ENCODE measurements at regions of chr11 and their contacts with region 1.

Region 1: GRCh38 chr11:74929431-74930363 is 19.2 kb downstream of the XRRA1 start:
- DNase-seq: peak; percentile 80
- ATAC-seq: peak; percentile 66
- H3K4me3 Mint-ChIP-seq: no peak overlapping the region
- H3K27ac Mint-ChIP-seq: no peak overlapping the region
- H3K4me1 Mint-ChIP-seq: peaks cover 54% of the 10 kb centered on the region
- H3K27me3 Mint-ChIP-seq: no peaks in the 10 kb centered on the region

Region 2: DNA sequence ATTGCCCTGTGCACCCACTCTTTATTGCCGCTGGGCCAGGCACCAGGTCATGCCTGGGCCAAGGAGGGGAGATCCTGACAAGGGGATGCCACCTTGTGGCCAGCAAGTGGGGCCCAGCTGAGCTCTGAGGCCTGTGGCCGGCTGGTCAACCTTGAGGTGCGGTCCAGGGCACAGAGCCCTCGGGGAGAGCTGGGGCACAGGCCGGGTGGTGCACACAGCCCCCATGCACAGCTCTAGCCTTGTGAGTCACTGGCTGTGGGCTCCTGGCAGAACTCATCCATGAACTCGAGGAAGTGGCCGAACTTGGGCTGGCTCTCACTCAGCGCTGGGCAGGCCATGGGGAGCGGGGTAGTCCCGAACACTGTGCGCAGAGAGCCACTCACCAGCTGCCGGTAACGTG is 86.7 kb before region 1 on chr11:
- CTCF ChIA-PET with region 1: no interaction called
- DNase-seq: no peak
- ATAC-seq: no peak
- H3K4me3 Mint-ChIP-seq: no peak overlapping the region
- H3K27ac Mint-ChIP-seq: no peak overlapping the region
- H3K4me1 Mint-ChIP-seq: peaks cover 10% of the 10 kb centered on the region
- H3K27me3 Mint-ChIP-seq: no peaks in the 10 kb centered on the region

Region 3: GRCh38 chr11:74988541-74989260 is 59.0 kb after region 1 on chr11 and contains the start of gene NEU3:
- CTCF ChIA-PET with region 1: interaction called, 15 read pairs
- DNase-seq: peak; percentile 92
- ATAC-seq: peak; percentile 97
- H3K4me3 Mint-ChIP-seq: peak within 1 kb of the TSS; percentile 97
- H3K27ac Mint-ChIP-seq: peak within 1 kb of the TSS; percentile 95
- H3K4me1 Mint-ChIP-seq: peaks cover 31% of the 10 kb centered on the region
- H3K27me3 Mint-ChIP-seq: no peaks in the 10 kb centered on the region
- total RNA-seq, gene NEU3: 14.2 to 20.0 TPM

Region 4: GRCh38 chr11:75031771-75032549 is 102.3 kb after region 1 on chr11:
- CTCF ChIA-PET with region 1: interaction called, 20 read pairs
- DNase-seq: peak; percentile 68
- ATAC-seq: peak; percentile 75
- H3K4me3 Mint-ChIP-seq: no peak overlapping the region
- H3K27ac Mint-ChIP-seq: no peak overlapping the region
- H3K4me1 Mint-ChIP-seq: peaks cover 9% of the 10 kb centered on the region
- H3K27me3 Mint-ChIP-seq: no peaks in the 10 kb centered on the region

Region 5: DNA sequence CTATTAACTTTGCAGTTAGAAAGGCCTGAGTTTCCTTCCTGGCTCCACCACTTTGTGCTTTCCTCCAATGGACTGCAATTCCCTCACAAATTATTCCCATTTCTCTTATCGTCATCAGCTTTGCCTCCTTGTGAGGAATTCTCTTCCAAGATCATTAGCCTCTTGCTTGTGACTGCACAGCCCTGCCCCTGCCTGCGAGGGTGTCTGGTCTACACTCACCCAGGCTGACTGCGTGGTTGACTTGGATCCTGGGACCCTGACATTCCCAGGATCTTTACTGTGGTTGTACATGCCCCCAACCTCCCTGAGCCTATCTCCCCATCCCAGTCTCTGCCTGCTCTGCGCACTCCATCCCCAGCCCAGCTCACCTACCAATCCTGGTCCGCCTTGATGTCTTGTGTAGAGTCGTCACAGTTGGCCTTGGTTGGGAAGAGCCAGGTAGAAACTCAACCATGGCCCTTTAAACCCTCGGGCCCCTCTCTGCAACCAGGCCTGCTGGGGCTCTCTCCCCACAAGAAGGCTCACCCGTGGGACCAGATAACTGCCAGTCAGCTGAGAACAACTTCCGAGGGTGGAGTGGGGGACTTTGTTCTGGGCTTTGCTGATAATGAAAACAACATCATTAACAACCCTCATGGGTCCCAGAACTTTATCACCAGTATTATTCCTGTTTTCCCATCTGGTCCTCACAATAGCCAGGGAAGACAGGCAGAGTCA is 166.9 kb after region 1 on chr11 and contains the start of gene OR2AT4:
- CTCF ChIA-PET with region 1: no interaction called
- DNase-seq: no peak
- ATAC-seq: no peak
- H3K4me3 Mint-ChIP-seq: no peak within 1 kb of the TSS
- H3K27ac Mint-ChIP-seq: no peak within 1 kb of the TSS
- H3K4me1 Mint-ChIP-seq: peaks cover 12% of the 10 kb centered on the region
- H3K27me3 Mint-ChIP-seq: peaks cover 55% of the 10 kb centered on the region
- total RNA-seq, gene OR2AT4: not detected

Region 6: DNA sequence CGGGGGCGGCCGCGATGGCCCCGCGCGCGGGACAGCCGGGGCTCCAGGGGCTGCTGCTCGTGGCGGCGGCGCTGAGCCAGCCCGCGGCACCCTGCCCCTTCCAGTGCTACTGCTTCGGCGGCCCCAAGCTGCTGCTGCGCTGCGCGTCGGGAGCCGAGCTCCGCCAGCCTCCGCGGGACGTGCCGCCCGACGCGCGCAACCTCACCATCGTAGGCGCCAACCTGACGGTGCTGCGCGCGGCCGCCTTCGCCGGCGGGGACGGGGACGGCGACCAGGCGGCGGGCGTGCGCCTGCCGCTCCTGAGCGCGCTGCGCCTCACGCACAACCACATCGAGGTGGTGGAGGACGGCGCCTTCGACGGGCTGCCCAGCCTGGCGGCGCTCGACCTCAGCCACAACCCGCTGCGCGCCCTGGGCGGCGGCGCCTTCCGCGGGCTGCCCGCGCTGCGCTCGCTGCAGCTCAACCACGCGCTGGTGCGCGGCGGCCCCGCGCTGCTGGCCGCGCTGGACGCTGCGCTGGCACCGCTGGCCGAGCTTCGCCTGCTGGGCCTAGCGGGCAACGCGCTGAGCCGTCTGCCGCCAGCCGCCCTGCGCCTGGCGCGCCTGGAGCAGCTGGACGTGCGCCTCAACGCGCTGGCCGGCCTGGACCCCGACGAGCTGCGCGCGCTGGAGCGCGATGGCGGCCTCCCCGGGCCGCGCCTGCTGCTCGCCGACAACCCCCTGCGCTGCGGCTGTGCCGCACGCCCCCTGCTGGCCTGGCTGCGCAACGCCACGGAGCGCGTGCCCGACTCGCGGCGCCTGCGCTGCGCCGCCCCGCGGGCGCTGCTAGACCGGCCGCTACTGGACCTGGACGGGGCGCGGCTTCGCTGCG is 311.6 kb after region 1 on chr11:
- CTCF ChIA-PET with region 1: interaction called, 44 read pairs
- DNase-seq: peak; percentile 88
- ATAC-seq: peak; percentile 97
- H3K4me3 Mint-ChIP-seq: peak overlapping the region; percentile 63
- H3K27ac Mint-ChIP-seq: no peak overlapping the region
- H3K4me1 Mint-ChIP-seq: peaks cover 9% of the 10 kb centered on the region
- H3K27me3 Mint-ChIP-seq: peaks cover 71% of the 10 kb centered on the region

Measured in activated CD8-positive, alpha-beta memory T cell treated with anti-CD3 and anti-CD28 coated beads, Interleukin-2, amount 10 ng/mL, durations not matched to agents 7 days and 5 days (primary cell).